ENCODE measurements at regions of chr13 and their contacts with region 1.

Region 1: DNA sequence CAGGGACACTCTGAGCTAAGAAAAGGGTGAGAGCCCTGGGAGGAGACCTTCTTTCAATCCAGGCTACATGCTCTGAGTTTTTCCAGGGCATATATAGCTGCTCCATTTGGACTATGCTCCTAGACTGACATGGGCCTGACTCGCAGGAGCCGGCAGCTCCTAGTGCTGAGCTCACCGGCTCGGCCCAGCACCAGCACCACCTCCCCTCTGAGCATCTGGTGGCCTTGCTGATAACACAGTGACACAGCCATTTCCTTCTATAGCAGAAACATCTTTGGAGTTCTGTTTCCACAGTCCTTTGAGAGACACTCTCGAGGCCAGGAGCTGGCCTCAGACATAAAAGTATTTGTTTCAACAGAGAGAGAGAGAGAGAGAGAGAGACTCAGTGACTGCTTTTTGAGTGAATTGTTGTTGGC is 184.9 kb downstream of the TM9SF2 start:
- DNase-seq: no peak
- H3K4me3 ChIP-seq: no peak overlapping the region
- H3K27me3 ChIP-seq: 0 out of 2 replicates have a peak, but pooled peaks cover 3% of the 10 kb centered on the region
- CTCF ChIP-seq: no peak

Region 2: DNA sequence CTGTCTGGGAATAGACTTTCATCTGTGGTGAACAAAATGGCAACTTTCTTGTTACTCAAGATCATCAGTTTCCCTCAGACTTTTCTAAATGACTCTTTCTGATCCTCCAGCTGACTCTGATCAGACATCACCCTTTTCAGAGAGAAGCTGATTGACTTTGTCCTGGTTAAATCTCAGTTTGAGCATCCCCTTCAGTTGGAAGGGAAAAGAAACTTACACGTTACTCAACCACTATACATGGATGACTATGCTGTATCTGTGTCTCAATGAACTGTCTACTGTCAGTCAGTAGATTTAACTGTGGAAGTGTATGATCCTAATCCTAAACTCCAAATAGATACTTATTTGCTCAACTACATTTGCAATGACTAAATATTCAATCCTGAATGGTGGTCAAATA is 1611.6 kb after region 1 on chr13:
- CTCF ChIA-PET with region 1: no interaction called
- POLR2A ChIA-PET with region 1: interaction called, 10 read pairs
- DNase-seq: no peak
- H3K4me3 ChIP-seq: no peak overlapping the region
- H3K27me3 ChIP-seq: no peaks in the 10 kb centered on the region; the same call in 1 of the 2 replicates
- CTCF ChIP-seq: no peak